Adrenal gland (tissue), 19 donors: ENCODE measurements at regions of chr13 and their contacts with region 1.

Region 1: DNA sequence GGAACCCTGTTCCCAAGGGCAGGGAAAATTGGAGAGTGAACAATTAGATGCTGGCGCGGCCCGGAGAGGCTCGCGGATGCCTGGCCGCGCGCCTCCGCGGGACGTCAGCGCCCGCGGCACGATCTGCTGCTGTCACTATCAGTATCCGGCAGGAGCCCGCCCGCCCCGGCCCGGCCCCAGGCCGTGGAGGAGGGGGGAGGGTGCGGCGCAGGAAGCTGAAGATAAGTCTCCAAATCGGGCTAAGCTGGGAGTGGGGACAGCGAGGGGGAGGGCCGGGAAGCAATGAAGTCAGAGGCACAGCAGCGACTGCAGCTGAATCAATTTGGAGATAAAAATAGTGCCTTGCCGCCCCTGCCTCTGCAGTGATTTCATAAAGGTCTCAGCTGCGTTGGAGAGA is 441.5 kb upstream of the KLF12 start:
- DNase-seq: peak; percentile 46 to 79 (median 66)
- H3K4me3 ChIP-seq: peak overlapping the region in 1 of 4 donors; percentile 44
- H3K27ac ChIP-seq: no peak overlapping the region
- H3K4me1 ChIP-seq: peaks cover 0 to 7% of the 10 kb centered on the region in 2 donors
- H3K27me3 ChIP-seq: no peaks in the 10 kb centered on the region
- CTCF ChIP-seq: peak in 1 of 6 experiments; percentile 20
- POLR2A ChIP-seq: no peak

Region 2: DNA sequence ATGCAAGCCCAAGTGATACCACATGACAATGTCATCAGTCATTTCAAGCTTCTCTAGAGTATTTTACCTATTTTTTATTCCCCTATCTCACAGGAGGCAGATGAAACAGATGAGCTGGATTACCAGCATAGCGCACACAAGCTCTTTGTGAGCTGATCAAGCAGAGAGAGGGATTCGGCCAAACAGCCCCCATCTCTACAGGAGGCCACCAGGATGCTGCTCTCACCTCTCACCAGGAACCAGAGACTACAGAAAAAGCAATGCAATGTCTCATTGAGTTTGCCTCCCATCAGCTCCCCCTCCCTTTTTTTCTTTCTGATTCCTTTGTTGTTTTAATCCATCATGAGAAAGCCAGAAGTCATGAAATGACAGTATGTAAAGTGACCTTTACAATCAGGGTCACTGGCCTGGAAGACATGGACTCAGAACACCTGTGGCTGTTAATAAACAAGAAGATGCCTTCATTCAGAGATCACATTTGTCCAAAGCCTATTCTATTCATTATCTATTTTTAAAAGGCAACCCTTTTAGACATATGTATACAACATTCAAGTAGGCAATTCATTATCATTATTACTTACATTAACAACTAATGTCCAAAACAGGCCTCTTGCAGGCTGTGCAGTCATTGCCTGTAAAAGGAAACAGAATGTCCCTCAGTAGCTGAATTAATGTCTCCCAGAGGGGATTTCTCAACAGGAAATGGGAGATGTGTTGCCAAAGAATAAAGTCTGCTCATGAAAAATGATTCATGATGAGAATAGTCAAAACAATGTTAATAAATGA is 249.6 kb after region 1 on chr13:
- intact Hi-C with region 1: loop called in 1 of 2 experiments (anchors 10 kb)
- DNase-seq: no peak
- H3K4me3 ChIP-seq: no peak overlapping the region
- H3K27ac ChIP-seq: no peak overlapping the region
- H3K4me1 ChIP-seq: no peaks in the 10 kb centered on the region
- H3K27me3 ChIP-seq: no peaks in the 10 kb centered on the region
- CTCF ChIP-seq: no peak
- POLR2A ChIP-seq: no peak

Region 3: DNA sequence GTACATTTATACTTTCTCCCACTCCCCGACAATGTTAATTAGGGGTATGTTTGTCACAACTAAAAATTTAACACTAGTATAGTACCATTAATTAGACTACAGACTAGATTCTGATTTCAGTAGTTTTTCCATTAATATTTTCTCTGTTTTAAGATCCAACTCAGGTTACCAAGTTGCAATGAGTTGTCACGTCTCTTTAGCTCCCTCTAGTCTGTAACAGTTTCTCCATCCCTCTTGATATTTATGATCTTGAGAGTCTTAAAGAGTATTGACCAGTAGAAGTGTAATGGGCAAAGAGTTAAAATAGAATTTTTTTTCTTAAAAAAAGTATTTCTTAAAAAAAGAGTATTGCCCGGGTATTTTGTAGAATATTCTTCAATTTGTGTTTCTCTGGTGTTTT is 308.1 kb after region 1 on chr13:
- intact Hi-C with region 1: no loop called
- DNase-seq: no peak
- H3K4me3 ChIP-seq: no peak overlapping the region
- H3K27ac ChIP-seq: no peak overlapping the region
- H3K4me1 ChIP-seq: no peaks in the 10 kb centered on the region
- H3K27me3 ChIP-seq: no peaks in the 10 kb centered on the region
- CTCF ChIP-seq: peak in 1 of 6 experiments; percentile 32
- POLR2A ChIP-seq: no peak

Region 4: GRCh38 chr13:74907788-74908187 is 332.1 kb after region 1 on chr13:
- intact Hi-C with region 1: no loop called
- DNase-seq: no peak
- H3K4me3 ChIP-seq: no peak overlapping the region
- H3K27ac ChIP-seq: no peak overlapping the region
- H3K4me1 ChIP-seq: no peaks in the 10 kb centered on the region
- H3K27me3 ChIP-seq: no peaks in the 10 kb centered on the region
- CTCF ChIP-seq: no peak
- POLR2A ChIP-seq: no peak

Region 5: GRCh38 chr13:74930402-74931165 is 354.9 kb after region 1 on chr13:
- intact Hi-C with region 1: no loop called
- DNase-seq: no peak
- H3K4me3 ChIP-seq: no peak overlapping the region
- H3K27ac ChIP-seq: no peak overlapping the region
- H3K4me1 ChIP-seq: no peaks in the 10 kb centered on the region
- H3K27me3 ChIP-seq: no peaks in the 10 kb centered on the region
- CTCF ChIP-seq: no peak
- POLR2A ChIP-seq: no peak